Activated naive CD4-positive, alpha-beta T cell treated with anti-CD3 and anti-CD28 coated beads for 36 hours (primary cell): ENCODE measurements at regions of chr6 and their contacts with region 1.

Region 1: DNA sequence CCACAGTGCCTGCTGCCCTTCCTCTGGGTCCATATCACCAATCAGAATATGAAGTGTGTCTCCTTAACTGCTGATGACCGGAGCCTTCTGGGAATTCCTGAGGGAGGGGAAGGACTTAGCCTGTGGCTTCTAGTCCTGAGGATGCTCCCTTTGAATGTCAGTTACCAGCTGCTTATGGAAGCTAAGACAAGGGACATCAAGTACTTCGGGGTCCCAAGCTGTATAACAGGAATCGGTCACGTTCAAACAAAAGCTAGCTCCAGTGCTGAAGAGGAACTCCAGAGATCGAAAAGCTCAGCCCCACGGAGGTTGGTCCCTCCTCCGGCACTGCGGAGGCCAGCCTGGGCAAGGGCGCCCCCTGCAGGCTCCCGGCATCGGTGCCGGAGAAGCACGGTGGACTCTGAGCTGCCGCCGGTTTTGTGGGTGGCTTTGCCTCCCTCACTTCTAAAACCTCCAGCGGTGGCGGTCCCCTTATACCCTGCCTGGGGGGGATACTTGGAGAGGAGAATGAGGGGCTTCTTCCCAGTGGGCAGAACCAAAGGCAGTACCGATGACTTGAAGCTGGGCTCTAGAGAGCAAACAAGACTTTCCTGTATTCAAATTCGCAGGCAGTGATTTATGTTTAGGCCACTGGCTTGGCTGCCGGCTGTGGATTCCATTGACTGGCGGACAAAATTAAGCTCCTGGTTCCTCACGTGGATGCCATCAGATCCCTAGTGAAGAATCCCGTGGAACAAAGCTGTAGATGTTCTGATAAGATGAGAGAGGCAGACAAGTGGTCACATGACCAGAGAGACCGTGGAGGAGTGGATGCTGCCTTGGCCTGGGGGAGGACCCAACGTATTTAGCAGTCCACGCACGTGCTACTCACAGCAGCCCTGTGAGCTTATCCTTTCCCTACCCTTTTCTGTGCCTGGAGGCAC is 16.2 kb upstream of the UBR2 start:
- DNase-seq: peak; percentile 92
- H3K4me3 Mint-ChIP-seq: peak overlapping the region; percentile 70
- H3K27ac Mint-ChIP-seq: no peak overlapping the region
- H3K4me1 Mint-ChIP-seq: peaks cover 14% of the 10 kb centered on the region
- H3K27me3 Mint-ChIP-seq: peaks cover 2% of the 10 kb centered on the region

Region 2: DNA sequence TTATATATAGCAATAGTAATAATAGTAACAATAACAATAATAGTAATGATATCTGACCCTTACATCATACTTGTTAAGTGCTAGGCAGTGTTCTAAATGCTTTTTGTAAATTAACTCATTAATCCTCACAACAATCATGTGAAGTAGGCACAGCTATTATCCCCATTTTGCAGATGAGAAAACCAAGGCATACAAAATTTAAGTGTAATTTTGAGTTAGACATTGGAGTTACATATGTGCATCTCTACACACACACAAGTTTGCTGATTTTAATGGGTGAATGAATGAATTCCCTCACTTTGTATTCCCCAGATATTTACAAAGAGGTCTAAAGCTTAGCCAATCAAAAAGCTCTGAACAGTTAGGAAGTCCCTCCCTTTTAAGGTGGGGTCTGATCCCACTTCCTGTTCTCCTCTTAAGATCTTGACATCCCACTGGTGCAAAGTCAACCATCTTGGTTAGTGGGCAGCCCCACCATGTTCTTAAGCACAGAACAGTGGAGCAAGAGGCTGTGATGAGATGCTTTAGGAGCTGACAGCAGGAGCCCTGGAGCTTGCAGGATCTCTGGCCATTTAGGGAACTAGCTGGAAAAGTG is 1086.8 kb before region 1 on chr6:
- CTCF ChIA-PET with region 1: no interaction called
- intact Hi-C with region 1: no loop called
- DNase-seq: no peak
- H3K4me3 Mint-ChIP-seq: no peak overlapping the region
- H3K27ac Mint-ChIP-seq: no peak overlapping the region
- H3K4me1 Mint-ChIP-seq: no peaks in the 10 kb centered on the region
- H3K27me3 Mint-ChIP-seq: peaks cover 24% of the 10 kb centered on the region

Region 3: GRCh38 chr6:42224222-42224989 is 323.3 kb before region 1 on chr6:
- CTCF ChIA-PET with region 1: interaction called, 10 read pairs
- intact Hi-C with region 1: no loop called
- DNase-seq: peak; percentile 17
- H3K4me3 Mint-ChIP-seq: peak overlapping the region; percentile 36
- H3K27ac Mint-ChIP-seq: peak overlapping the region; percentile 80
- H3K4me1 Mint-ChIP-seq: peaks cover 22% of the 10 kb centered on the region
- H3K27me3 Mint-ChIP-seq: no peaks in the 10 kb centered on the region

Region 4: GRCh38 chr6:42306439-42307140 is 241.1 kb before region 1 on chr6:
- CTCF ChIA-PET with region 1: interaction called, 18 read pairs
- intact Hi-C with region 1: loop called (anchors 5 kb)
- DNase-seq: no peak
- H3K4me3 Mint-ChIP-seq: no peak overlapping the region
- H3K27ac Mint-ChIP-seq: no peak overlapping the region
- H3K4me1 Mint-ChIP-seq: no peaks in the 10 kb centered on the region
- H3K27me3 Mint-ChIP-seq: no peaks in the 10 kb centered on the region

Region 5: DNA sequence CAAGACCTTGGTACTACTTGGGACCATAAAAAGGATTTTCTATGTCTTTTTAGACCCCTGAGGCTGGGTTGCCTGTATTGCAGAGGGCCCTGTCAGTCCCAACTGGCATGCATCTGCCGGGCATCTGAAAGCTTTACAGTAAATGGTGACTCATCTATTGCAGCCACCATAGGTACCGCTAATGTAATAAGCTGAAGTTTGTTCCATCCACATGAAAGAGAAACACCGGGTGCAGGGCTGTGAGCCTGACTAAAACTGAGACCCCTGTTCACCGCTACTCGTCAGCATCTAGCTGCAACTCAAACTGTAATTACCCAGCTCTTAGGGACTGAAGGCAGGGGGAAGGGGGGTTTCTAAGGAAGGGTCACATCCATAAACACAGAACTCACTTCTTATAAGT is 145.5 kb before region 1 on chr6:
- CTCF ChIA-PET with region 1: interaction called, 7 read pairs
- intact Hi-C with region 1: loop called (anchors 5 kb)
- DNase-seq: peak; percentile 85
- H3K4me3 Mint-ChIP-seq: no peak overlapping the region
- H3K27ac Mint-ChIP-seq: peak overlapping the region; percentile 50
- H3K4me1 Mint-ChIP-seq: peaks cover 65% of the 10 kb centered on the region
- H3K27me3 Mint-ChIP-seq: no peaks in the 10 kb centered on the region

Region 6: DNA sequence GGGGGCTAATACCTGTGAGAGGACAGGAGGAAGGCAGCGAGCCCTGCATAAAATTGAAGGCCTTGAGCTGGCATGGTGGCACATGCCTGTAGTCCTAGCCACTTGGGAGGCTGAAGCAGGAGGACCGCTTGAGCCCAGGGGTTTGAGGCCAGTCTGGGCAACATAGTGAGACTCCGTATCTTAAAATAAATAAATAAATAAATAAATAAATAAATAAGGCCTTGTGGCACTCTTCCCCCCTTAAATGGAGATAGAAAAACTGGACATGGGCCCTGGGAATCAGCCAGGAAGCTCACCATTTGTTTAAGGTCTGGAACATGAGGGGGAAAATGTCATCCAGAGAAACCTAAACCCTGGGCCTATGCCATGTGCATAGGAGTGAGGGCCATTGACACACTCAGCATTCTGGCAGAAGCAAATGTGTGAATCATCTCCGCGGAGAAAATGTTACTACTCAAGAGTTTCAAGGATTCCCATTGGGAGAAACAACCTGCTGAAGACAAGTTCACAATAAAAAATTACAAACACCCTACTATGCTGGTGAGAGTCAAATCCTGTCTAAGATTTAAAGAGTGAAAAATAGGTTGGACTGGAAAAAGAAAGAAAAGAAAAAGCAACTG is 35.8 kb before region 1 on chr6:
- CTCF ChIA-PET with region 1: interaction called, 31 read pairs
- intact Hi-C with region 1: no loop called
- DNase-seq: no peak
- H3K4me3 Mint-ChIP-seq: no peak overlapping the region
- H3K27ac Mint-ChIP-seq: no peak overlapping the region
- H3K4me1 Mint-ChIP-seq: peaks cover 11% of the 10 kb centered on the region
- H3K27me3 Mint-ChIP-seq: no peaks in the 10 kb centered on the region

Region 7: GRCh38 chr6:42537536-42537935 is 10.1 kb before region 1 on chr6:
- CTCF ChIA-PET with region 1: interaction called, 29 read pairs
- intact Hi-C with region 1: no loop called
- DNase-seq: no peak
- H3K4me3 Mint-ChIP-seq: no peak overlapping the region
- H3K27ac Mint-ChIP-seq: no peak overlapping the region
- H3K4me1 Mint-ChIP-seq: no peaks in the 10 kb centered on the region
- H3K27me3 Mint-ChIP-seq: no peaks in the 10 kb centered on the region

Region 8: GRCh38 chr6:42879372-42880239 is 331.9 kb after region 1 on chr6 and contains the start of gene RPL7L1:
- CTCF ChIA-PET with region 1: no interaction called
- intact Hi-C with region 1: loop called (anchors 5 kb)
- DNase-seq: peak; percentile 87
- H3K4me3 Mint-ChIP-seq: peak within 1 kb of the TSS; percentile 98
- H3K27ac Mint-ChIP-seq: peak within 1 kb of the TSS; percentile 99
- H3K4me1 Mint-ChIP-seq: peaks cover 23% of the 10 kb centered on the region
- H3K27me3 Mint-ChIP-seq: no peaks in the 10 kb centered on the region
- total RNA-seq, gene RPL7L1: 99.0 to 101 TPM